ENCODE measurements at regions of chr3 and their contacts with region 1.

Region 1: DNA sequence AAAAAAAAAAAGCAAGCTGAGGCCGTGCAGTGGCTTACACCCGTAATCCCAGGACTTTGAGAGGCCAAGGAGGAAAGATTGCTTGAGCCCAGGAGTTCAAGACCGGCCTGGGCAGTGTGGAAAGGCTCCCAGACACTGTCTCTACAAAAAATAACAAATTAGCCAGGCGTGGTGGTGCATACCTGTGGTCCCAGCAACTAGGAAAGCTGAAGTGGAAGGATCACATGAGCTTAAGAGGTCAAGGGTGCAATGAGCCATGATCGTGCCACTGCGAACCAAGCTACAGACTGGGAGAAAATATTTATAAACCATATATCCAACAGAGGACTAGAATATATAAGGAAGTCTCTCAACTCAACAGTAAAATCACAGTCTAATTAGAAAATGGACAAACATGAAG is 10.0 kb downstream of the KLHDC8B start:
- DNase-seq: no peak
- ATAC-seq: no peak
- H3K4me3 ChIP-seq: no peak overlapping the region
- H3K27ac ChIP-seq: no peak overlapping the region
- H3K4me1 ChIP-seq: no peaks in the 10 kb centered on the region
- H3K27me3 ChIP-seq: no peaks in the 10 kb centered on the region
- CTCF ChIP-seq: no peak

Region 2: GRCh38 chr3:49260806-49261324 is 79.5 kb after region 1 on chr3:
- CTCF ChIA-PET with region 1: no interaction called
- POLR2A ChIA-PET with region 1: interaction called, 13 read pairs
- in situ Hi-C with region 1: no loop called
- intact Hi-C with region 1: no loop called
- DNase-seq: no peak
- ATAC-seq: no peak
- H3K4me3 ChIP-seq: no peak overlapping the region
- H3K27ac ChIP-seq: no peak overlapping the region
- H3K4me1 ChIP-seq: no peaks in the 10 kb centered on the region
- H3K27me3 ChIP-seq: no peaks in the 10 kb centered on the region
- CTCF ChIP-seq: no peak

Region 3: GRCh38 chr3:49339945-49340800 is 158.8 kb after region 1 on chr3 and contains the start of gene USP4:
- CTCF ChIA-PET with region 1: no interaction called
- POLR2A ChIA-PET with region 1: no interaction called
- in situ Hi-C with region 1: no loop called
- intact Hi-C with region 1: no loop called
- DNase-seq: peak; percentile 47
- ATAC-seq: peak; percentile 97
- H3K4me3 ChIP-seq: peak within 1 kb of the TSS; percentile 72 to 83
- H3K27ac ChIP-seq: peak within 1 kb of the TSS; percentile 91
- H3K4me1 ChIP-seq: peaks cover 3% of the 10 kb centered on the region; the same call in 1 of the 2 replicates
- H3K27me3 ChIP-seq: no peaks in the 10 kb centered on the region
- CTCF ChIP-seq: peak; percentile 49; the same call in 1 of the 2 replicates
- total RNA-seq, gene USP4: 39.9 TPM

Measured in Panc1 (cell line).